AG04449 (cell line): ENCODE measurements at regions of chr10 and their contacts with region 1.

Region 1: GRCh38 chr10:103685880-103686669 is 169.3 kb downstream of the SH3PXD2A start:
- DNase-seq: no peak
- H3K4me3 ChIP-seq: no peak overlapping the region
- CTCF ChIP-seq: peak; percentile 95

Region 2: GRCh38 chr10:103618575-103619423 is 67.3 kb before region 1 on chr10:
- CTCF ChIA-PET with region 1: interaction called, 133 read pairs
- POLR2A ChIA-PET with region 1: no interaction called
- DNase-seq: no peak
- H3K4me3 ChIP-seq: no peak overlapping the region
- CTCF ChIP-seq: no peak

Region 3: DNA sequence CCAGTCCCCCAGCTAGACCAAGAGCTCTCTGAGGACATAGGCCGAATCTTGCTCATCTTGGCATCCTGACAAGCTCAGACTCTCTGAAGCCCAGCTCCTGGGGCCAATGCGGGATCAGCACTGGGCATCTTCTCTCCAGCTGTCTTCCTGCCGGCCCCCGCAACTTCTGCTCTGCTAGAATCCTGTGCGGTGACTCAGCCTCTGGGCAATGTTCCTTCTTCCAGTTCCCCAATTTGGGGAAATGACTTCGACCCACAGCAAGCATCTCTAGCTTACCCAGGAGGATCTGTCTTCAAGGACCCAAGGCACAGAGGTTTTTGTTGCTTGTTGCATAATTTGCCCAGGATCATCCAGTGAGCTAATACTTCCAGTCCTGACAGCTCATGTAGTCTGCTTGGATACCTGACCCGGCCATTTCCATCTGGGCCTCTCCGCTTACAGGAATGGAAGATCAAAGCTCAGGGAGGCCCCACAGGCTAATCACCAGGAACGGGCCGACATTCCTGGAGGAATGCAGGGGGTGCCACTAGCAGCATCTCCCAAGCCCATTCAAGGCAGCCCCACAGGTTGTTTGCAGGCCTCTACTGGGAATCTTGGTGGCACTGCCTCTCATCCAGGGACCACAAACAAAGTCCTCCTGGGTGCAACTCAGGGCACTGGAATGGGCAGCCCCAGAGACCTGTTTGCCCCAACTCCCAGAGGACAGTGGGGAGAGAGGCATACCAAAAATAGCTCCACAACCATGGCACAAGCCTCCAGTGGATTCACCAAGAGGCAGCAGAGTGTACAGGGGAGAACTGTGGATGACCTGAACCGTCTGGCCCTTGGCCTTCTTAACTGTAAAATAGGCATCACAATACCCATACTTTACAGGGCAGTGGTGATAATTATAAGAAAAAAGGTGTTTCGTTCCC is 40.7 kb before region 1 on chr10:
- CTCF ChIA-PET with region 1: interaction called, 13 read pairs
- POLR2A ChIA-PET with region 1: interaction called, 3 read pairs
- DNase-seq: peak; percentile 91
- H3K4me3 ChIP-seq: no peak overlapping the region
- CTCF ChIP-seq: no peak

Region 4: DNA sequence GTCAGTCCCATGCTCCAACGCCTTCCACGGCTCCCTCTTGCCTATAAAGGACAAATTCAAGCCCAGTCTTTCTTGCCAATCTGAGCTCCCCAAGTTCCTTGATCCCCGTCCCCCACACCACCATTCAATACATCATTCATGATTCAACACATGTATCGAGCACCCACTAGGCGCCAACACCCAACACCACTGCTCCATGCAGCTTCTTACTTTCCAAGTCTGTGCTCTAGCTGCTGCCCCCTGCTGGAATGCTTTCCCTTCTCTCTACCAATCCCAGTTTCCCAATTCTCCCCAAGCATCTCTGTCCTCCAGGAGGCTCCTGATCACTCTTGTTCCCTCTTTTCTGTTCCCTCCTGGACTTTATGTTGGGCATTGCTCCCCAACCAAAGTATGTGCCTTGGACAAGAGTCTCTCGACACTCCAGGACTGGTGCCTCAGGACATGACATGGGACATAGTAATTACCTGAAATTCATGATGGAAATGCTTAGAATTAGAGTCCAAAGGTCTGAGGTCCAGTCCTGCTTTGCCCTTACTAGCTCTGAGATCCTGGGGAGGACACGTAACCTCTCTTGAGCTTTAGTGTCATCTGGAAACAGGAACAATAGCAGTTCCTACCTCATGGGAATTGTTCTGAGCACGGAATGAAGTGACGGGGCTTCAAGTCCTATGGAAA is 19.9 kb before region 1 on chr10:
- CTCF ChIA-PET with region 1: interaction called, 84 read pairs
- POLR2A ChIA-PET with region 1: interaction called, 4 read pairs
- DNase-seq: no peak
- H3K4me3 ChIP-seq: no peak overlapping the region
- CTCF ChIP-seq: peak; percentile 36

Region 5: DNA sequence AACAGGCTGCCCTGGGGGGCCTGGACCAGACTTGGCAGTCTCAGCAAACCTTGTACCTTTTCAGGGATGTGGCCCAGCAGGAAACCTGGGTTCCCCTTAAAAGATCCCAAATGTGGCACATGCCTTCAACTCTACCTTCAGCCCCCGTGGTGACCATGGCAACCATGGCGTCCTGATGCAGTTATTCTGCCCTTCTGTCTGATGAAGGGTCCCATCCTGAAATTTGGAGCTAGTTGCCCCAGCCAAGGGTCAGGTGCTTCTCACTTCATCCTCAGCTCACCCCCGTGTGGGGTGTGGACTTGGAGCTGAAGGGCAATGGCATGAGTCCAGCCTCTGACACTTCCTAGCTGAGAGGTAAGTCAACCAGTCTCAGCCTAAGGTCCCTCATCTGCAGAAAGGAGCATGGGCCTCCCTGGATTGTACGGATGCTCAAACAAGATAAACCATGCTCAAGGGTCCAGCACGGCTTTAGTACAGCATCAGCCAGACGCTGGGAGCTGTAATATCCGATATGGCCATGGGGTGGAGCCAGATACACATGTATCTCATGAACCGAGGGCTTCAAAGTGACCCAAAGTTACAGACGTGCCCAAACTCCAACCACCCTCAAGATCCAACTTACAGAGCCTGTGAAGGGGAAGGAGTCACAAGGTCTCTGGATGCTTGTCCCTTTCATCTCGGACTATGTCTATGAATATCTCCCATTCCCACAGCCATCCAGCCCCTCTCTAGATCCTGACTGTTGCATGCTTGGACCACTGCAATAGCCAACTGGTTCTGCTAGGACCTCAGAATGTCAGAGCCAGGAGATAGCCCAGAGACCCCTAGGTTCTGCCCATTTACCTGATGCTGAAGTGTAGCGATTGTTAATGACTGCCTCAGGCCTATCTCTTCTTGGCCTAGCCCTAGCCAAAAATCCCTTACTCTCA is 26.8 kb after region 1 on chr10:
- CTCF ChIA-PET with region 1: interaction called, 34 read pairs
- POLR2A ChIA-PET with region 1: no interaction called
- DNase-seq: no peak
- H3K4me3 ChIP-seq: no peak overlapping the region
- CTCF ChIP-seq: peak; percentile 79

Region 6: DNA sequence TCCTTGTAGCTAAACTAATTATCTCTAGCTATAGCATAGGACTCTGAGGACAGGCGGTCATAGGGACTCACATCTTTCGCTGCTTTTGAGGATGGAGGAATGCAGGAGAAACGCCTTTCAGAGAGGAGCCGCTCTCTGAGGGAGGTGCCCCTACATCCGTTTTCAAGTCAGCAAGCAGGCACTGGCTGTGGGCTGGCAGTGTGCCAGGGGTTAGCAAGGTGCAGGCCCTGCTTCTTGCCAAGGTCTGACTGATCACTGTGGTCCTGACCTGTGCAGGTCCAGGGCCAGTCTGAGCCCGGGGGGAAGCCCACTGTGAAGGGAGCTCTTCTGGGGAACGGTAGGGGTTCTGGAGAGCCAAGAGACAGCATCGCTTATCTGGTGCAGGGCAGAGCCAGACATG is 79.9 kb after region 1 on chr10:
- CTCF ChIA-PET with region 1: no interaction called
- POLR2A ChIA-PET with region 1: no interaction called
- DNase-seq: no peak
- H3K4me3 ChIP-seq: no peak overlapping the region
- CTCF ChIP-seq: no peak